Gastrocnemius medialis (tissue), 4 donors: ENCODE measurements at regions of chr14 and their contacts with region 1.

Region 1: GRCh38 chr14:24366721-24367513 is 1.1 kb upstream of the NFATC4 start:
- DNase-seq: peak; percentile 58 to 73
- ATAC-seq: peak; percentile 48 to 60
- H3K4me3 ChIP-seq: peak overlapping the region; percentile 44 to 62 (median 55)
- H3K27ac ChIP-seq: peak overlapping the region; percentile 74 to 85 (median 80)
- H3K4me1 ChIP-seq: peaks cover 10% of the 10 kb centered on the region in 2 donors
- H3K27me3 ChIP-seq: peaks cover 38 to 46% (median 43%) of the 10 kb centered on the region in 3 donors
- CTCF ChIP-seq: no peak
- POLR2A ChIP-seq: peak in 1 of 2 donors; percentile 57

Region 2: DNA sequence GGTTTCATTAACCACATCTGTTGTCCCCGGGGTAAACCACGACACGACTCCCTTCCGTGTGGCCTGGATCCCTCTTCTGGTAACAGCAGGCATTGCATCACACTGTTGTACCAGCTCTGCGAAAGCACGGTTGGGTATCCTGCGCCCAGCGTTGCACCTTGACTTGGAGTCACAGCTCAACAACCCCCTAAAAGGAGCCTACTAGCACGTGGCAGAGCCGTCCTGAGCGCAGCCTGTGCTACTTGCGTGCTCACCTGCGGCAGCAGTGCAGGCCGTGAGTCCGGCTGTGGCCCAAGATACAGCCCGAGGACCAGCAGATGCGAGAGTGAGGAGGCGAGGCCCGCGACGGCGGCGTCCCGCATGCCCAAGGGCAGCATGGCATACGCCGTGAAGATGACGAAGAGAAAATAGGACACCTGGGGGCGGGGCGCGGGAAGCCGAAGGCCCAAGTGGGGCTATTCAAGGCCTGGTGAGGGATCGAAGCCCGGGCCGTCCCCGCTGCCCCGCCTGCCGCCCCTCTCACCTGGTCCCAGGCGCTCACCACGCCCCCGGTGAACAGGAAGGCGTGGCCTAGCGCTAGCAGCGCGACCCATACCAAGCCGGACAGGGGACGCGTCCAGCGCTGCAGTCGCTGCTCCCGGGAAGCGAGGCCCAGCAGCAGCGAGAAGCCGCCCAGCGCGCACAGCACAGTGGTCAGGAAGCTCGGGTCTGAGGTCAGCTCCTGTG is 34.5 kb before region 1 on chr14:
- in situ Hi-C with region 1: no loop called
- intact Hi-C with region 1: loop called (anchors 2 kb)
- DNase-seq: peak; percentile 43 to 45
- ATAC-seq: peak; percentile 57 to 72
- H3K4me3 ChIP-seq: peak overlapping the region in 3 of 4 donors; percentile 19 to 23 (median 19)
- H3K27ac ChIP-seq: no peak overlapping the region
- H3K4me1 ChIP-seq: peaks cover 9 to 25% of the 10 kb centered on the region in 2 donors
- H3K27me3 ChIP-seq: peaks cover 19 to 45% (median 39%) of the 10 kb centered on the region in 3 donors
- CTCF ChIP-seq: peak; percentile 29 to 65 (median 48)
- POLR2A ChIP-seq: no peak

Region 3: GRCh38 chr14:24403294-24403998 is 36.5 kb after region 1 on chr14:
- in situ Hi-C with region 1: no loop called
- intact Hi-C with region 1: loop called (anchors 5 kb)
- DNase-seq: no peak
- ATAC-seq: peak; percentile 36 to 40
- H3K4me3 ChIP-seq: no peak overlapping the region
- H3K27ac ChIP-seq: peak overlapping the region in 1 of 4 donors; percentile 16
- H3K4me1 ChIP-seq: peaks cover 12 to 27% of the 10 kb centered on the region in 2 donors
- H3K27me3 ChIP-seq: peaks cover 0 to 10% (median 0%) of the 10 kb centered on the region in 3 donors
- CTCF ChIP-seq: no peak
- POLR2A ChIP-seq: no peak